Heart right ventricle (tissue), 16 donors: ENCODE measurements at regions of chr4 and their contacts with region 1.

Region 1: DNA sequence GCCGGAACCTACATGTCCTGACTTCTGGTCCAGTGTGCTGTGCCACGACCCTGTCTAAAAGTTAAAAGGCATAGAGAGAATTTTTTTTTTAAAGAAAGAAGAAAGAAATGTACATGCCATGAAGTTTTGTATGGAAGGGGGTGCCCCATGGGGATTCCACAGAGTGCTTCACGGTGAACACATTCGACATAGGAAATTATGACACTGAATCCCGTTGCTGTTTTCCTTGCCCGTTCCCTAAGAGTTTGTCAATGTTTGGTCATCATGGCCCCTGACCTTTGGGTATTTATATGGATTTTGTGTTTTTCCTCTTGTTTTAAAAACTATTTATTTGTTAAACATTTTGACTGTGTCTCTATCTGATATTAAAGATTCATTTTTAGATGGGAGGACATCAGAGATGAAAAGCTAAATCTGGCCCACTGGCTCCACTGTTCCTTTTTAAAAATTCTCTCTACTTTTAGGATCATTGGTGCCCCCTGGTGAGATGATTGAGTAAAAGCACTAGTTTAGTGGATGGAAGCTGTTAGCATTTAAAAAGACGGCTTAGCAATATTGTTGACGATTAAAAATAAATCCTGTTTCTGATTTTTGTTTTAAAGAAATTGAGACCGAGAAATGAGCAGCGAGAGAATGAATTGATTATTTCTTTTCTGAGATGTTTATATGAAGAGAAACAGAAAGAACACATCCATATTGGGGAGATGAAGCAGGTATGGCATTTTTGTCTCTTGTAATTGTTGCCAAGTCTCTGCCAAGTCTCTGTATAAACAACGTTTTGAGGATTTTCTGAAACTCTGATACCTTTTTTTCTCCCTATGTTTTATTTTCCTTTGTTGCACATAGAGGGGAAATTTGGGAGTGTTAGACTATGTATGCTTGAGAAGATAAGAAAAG is 75.0 kb downstream of the PTTG2 start:
- DNase-seq: peak in 1 of 2 donors; percentile 77
- ATAC-seq: peak in 5 of 8 donors; percentile 47 to 86 (median 70)
- H3K4me3 ChIP-seq: no peak overlapping the region
- H3K27ac ChIP-seq: peak overlapping the region in 1 of 10 donors; percentile 26
- H3K4me1 ChIP-seq: peaks cover 0 to 8% (median 0%) of the 10 kb centered on the region in 9 donors
- H3K27me3 ChIP-seq: no peaks in the 10 kb centered on the region
- CTCF ChIP-seq: peak; percentile 55 to 81 (median 72)

Region 2: DNA sequence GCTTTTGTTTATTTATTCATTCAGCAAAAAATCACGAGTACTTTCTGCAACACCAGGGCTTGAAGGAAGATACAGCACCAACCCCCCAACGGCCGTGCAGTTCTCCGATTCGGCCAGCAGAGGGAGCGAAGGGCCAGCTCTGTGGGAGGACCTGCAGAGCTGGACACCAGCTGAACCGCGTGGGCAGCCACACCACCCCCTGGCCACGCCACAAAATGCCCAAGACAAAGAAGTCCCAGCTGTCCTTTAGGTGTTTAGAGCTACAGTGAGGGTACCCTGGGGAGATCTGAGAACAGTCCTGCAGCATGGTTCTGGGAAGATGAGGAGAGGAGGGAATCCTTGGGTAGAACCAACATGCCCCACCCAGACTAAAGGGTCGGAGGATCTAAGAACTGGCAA is 432.2 kb before region 1 on chr4:
- intact Hi-C with region 1: loop called in 8 of 10 experiments (anchors 5 to 10 kb)
- DNase-seq: peak; percentile 82 to 87
- ATAC-seq: peak; percentile 93 to 96 (median 95)
- H3K4me3 ChIP-seq: no peak overlapping the region
- H3K27ac ChIP-seq: no peak overlapping the region
- H3K4me1 ChIP-seq: peaks cover 0 to 20% (median 0%) of the 10 kb centered on the region in 9 donors
- H3K27me3 ChIP-seq: no peaks in the 10 kb centered on the region
- CTCF ChIP-seq: peak; percentile 93 to 99 (median 95)

Region 3: GRCh38 chr4:37802068-37802666 is 233.1 kb before region 1 on chr4:
- intact Hi-C with region 1: loop called (anchors 1 to 10 kb)
- DNase-seq: peak in 1 of 2 donors; percentile 53
- ATAC-seq: peak; percentile 30 to 89 (median 79)
- H3K4me3 ChIP-seq: no peak overlapping the region
- H3K27ac ChIP-seq: no peak overlapping the region
- H3K4me1 ChIP-seq: peaks cover 0 to 7% (median 0%) of the 10 kb centered on the region in 9 donors
- H3K27me3 ChIP-seq: no peaks in the 10 kb centered on the region
- CTCF ChIP-seq: peak in 8 of 9 donors; percentile 21 to 77 (median 52)

Region 4: GRCh38 chr4:37970487-37971101 is 64.6 kb before region 1 on chr4:
- intact Hi-C with region 1: loop called in 5 of 10 experiments (anchors 5 to 10 kb)
- DNase-seq: peak; percentile 72 to 80
- ATAC-seq: peak; percentile 85 to 97 (median 93)
- H3K4me3 ChIP-seq: no peak overlapping the region
- H3K27ac ChIP-seq: peak overlapping the region in 9 of 10 donors; percentile 56 to 79 (median 68)
- H3K4me1 ChIP-seq: peaks cover 5 to 53% (median 24%) of the 10 kb centered on the region in 9 donors
- H3K27me3 ChIP-seq: no peaks in the 10 kb centered on the region
- CTCF ChIP-seq: peak; percentile 41 to 79 (median 65)

Region 5: GRCh38 chr4:38062088-38062893 is 27.1 kb after region 1 on chr4:
- intact Hi-C with region 1: no loop called
- DNase-seq: peak; percentile 74 to 87
- ATAC-seq: peak; percentile 52 to 89 (median 79)
- H3K4me3 ChIP-seq: peak overlapping the region in 8 of 10 donors; percentile 21 to 54 (median 42)
- H3K27ac ChIP-seq: peak overlapping the region in 9 of 10 donors; percentile 18 to 81 (median 75)
- H3K4me1 ChIP-seq: peaks cover 0 to 46% (median 26%) of the 10 kb centered on the region in 9 donors
- H3K27me3 ChIP-seq: no peaks in the 10 kb centered on the region
- CTCF ChIP-seq: peak; percentile 74 to 95 (median 87)

Region 6: GRCh38 chr4:38105475-38106220 is 70.4 kb after region 1 on chr4:
- intact Hi-C with region 1: no loop called
- DNase-seq: no peak
- ATAC-seq: no peak
- H3K4me3 ChIP-seq: no peak overlapping the region
- H3K27ac ChIP-seq: peak overlapping the region in 2 of 10 donors; percentile 21 to 43
- H3K4me1 ChIP-seq: peaks cover 0 to 26% (median 12%) of the 10 kb centered on the region in 9 donors
- H3K27me3 ChIP-seq: no peaks in the 10 kb centered on the region
- CTCF ChIP-seq: no peak

Region 7: GRCh38 chr4:38237139-38237538 is 201.9 kb after region 1 on chr4:
- intact Hi-C with region 1: no loop called
- DNase-seq: no peak
- ATAC-seq: no peak
- H3K4me3 ChIP-seq: no peak overlapping the region
- H3K27ac ChIP-seq: no peak overlapping the region
- H3K4me1 ChIP-seq: peaks cover 0 to 6% (median 0%) of the 10 kb centered on the region in 9 donors
- H3K27me3 ChIP-seq: no peaks in the 10 kb centered on the region
- CTCF ChIP-seq: no peak